Activated T-helper 1 cell treated with anti-CD3 and anti-CD28 coated beads, Interleukin-12 subunit alpha, Interleukin-12 subunit beta, Interleukin-2, Interleukin-4 antibody, amounts not matched to agents 30 ng/mL and 10 ng/mL and 1 ng/mL, durations not matched to agents 14 hours and 24 hours and 36 hours (primary cell): ENCODE measurements at regions of chr6 and their contacts with region 1.

Region 1: DNA sequence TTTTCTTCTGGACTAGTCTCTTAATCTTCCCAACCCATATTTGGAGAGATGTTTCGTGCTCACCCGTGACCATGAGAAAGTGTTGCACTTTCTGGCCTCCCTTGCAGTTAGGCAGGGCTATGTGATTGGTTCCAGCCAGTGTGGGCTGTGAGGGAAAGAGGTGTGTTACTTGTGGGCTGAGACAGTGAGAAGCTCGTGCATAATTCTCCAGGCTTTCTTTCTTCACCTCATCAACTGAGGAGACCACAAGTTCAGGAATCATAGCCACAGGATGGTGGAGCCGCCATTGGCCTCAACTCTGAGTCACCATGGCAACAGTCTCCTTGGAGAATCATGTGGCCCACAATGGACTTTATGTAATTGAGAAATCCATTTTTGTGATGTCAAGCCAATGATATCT is 57.5 kb upstream of the FUCA2 start:
- DNase-seq: no peak
- H3K4me3 Mint-ChIP-seq: no peak overlapping the region
- H3K27ac Mint-ChIP-seq: no peak overlapping the region
- H3K4me1 Mint-ChIP-seq: peaks cover 39% of the 10 kb centered on the region
- H3K27me3 Mint-ChIP-seq: no peaks in the 10 kb centered on the region

Region 2: GRCh38 chr6:143555071-143555492 is 14.0 kb before region 1 on chr6:
- intact Hi-C with region 1: loop called (anchors 2 kb)
- DNase-seq: no peak
- H3K4me3 Mint-ChIP-seq: peak overlapping the region; percentile 63
- H3K27ac Mint-ChIP-seq: peak overlapping the region; percentile 76
- H3K4me1 Mint-ChIP-seq: peaks cover 85% of the 10 kb centered on the region
- H3K27me3 Mint-ChIP-seq: no peaks in the 10 kb centered on the region